Activated CD4-positive, alpha-beta T cell treated with anti-CD3 and anti-CD28 coated beads, Interleukin-2, amount 10 ng/mL, durations not matched to agents 24 days and 14 days (primary cell): ENCODE measurements at regions of chr14 and their contacts with region 1.

Region 1: GRCh38 chr14:21233457-21234076 is 35.7 kb downstream of the HNRNPC start:
- DNase-seq: no peak
- H3K4me3 Mint-ChIP-seq: peak overlapping the region; percentile 6
- H3K27ac Mint-ChIP-seq: peak overlapping the region; percentile 4
- H3K4me1 Mint-ChIP-seq: peaks cover 67% of the 10 kb centered on the region
- H3K27me3 Mint-ChIP-seq: no peaks in the 10 kb centered on the region

Region 2: DNA sequence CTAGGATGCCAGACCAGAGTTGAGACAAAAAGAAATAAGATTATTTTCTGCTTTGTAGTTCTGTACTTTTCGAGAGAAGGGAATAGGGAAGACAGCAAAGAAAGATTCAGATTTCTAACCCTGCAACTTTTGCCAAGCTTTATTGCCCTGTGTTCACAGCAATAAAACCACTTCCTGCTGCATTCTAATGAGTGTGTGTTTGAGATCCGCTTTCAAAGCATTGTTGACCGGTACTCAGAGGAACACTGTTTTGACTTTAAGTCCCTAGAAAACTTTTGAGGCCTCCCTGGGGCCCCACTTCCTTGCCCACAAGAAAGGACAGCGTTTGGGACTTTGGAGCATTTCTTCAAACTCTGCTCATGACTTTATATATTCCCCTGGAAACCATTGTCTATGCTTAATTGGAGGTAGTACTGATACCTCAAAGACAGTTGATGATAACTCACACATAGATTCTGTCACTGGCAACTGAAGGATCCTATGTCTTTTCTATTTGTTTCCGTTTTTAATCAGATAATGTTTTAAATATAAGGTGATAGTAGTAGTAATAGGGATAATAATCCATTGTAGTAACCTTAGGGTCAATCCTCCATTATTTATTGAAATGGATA is 451.2 kb before region 1 on chr14:
- intact Hi-C with region 1: no loop called
- DNase-seq: peak; percentile 72
- H3K4me3 Mint-ChIP-seq: peak overlapping the region; percentile 80
- H3K27ac Mint-ChIP-seq: peak overlapping the region; percentile 75
- H3K4me1 Mint-ChIP-seq: peaks cover 23% of the 10 kb centered on the region
- H3K27me3 Mint-ChIP-seq: peaks cover 6% of the 10 kb centered on the region

Region 3: DNA sequence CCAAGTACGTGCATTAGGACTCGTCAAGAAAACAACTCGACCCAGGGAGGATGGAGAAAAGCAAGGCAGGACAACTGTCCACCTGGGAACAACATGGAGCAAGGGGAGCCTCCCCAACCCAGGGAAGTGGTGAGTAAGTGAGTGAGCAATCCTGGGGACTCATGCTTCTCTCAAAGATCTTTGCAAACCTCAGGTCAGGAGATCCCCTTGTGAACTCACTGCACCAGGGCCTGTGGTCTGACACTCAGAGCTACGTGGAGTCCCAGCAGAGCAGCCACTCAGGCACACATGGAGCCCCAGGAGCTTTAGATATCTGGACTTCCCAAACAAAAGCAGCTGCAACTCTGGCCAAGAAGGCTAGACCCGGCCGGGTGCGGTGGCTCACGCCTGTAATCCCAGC is 65.5 kb before region 1 on chr14:
- intact Hi-C with region 1: no loop called
- DNase-seq: peak; percentile 40
- H3K4me3 Mint-ChIP-seq: no peak overlapping the region
- H3K27ac Mint-ChIP-seq: no peak overlapping the region
- H3K4me1 Mint-ChIP-seq: no peaks in the 10 kb centered on the region
- H3K27me3 Mint-ChIP-seq: peaks cover 32% of the 10 kb centered on the region

Region 4: DNA sequence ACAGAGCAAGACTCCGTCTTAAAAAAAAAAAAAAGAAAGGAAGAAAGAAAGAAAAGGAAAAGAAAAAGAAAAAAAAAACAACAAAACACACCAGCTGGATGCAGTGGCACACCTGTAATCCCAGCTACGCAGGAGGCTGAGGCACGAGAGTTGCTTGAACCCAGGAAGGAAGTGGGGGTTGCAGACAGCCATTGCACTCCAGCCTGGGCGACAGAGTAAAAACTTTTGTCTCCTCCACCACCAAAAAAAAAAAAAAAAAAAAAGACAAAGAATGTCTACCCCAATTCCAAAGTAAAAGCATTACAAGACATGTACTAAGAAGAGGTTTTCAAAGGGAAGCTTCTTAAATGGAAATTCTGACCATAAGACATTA is 17.7 kb before region 1 on chr14:
- intact Hi-C with region 1: loop called (anchors 2 kb)
- DNase-seq: no peak
- H3K4me3 Mint-ChIP-seq: peak overlapping the region; percentile 52
- H3K27ac Mint-ChIP-seq: peak overlapping the region; percentile 78
- H3K4me1 Mint-ChIP-seq: peaks cover 44% of the 10 kb centered on the region
- H3K27me3 Mint-ChIP-seq: no peaks in the 10 kb centered on the region

Region 5: GRCh38 chr14:21220874-21221477 is 12.6 kb before region 1 on chr14:
- intact Hi-C with region 1: loop called (anchors 1 kb)
- DNase-seq: no peak
- H3K4me3 Mint-ChIP-seq: peak overlapping the region; percentile 32
- H3K27ac Mint-ChIP-seq: peak overlapping the region; percentile 89
- H3K4me1 Mint-ChIP-seq: peaks cover 43% of the 10 kb centered on the region
- H3K27me3 Mint-ChIP-seq: no peaks in the 10 kb centered on the region

Region 6: GRCh38 chr14:21263656-21264411 is 30.3 kb after region 1 on chr14:
- intact Hi-C with region 1: loop called (anchors 2 kb)
- DNase-seq: peak; percentile 64
- H3K4me3 Mint-ChIP-seq: peak overlapping the region; percentile 92
- H3K27ac Mint-ChIP-seq: peak overlapping the region; percentile 97
- H3K4me1 Mint-ChIP-seq: peaks cover 58% of the 10 kb centered on the region
- H3K27me3 Mint-ChIP-seq: no peaks in the 10 kb centered on the region